K562 (cell line): ENCODE measurements at regions of chr6 and their contacts with region 1.

Region 1: DNA sequence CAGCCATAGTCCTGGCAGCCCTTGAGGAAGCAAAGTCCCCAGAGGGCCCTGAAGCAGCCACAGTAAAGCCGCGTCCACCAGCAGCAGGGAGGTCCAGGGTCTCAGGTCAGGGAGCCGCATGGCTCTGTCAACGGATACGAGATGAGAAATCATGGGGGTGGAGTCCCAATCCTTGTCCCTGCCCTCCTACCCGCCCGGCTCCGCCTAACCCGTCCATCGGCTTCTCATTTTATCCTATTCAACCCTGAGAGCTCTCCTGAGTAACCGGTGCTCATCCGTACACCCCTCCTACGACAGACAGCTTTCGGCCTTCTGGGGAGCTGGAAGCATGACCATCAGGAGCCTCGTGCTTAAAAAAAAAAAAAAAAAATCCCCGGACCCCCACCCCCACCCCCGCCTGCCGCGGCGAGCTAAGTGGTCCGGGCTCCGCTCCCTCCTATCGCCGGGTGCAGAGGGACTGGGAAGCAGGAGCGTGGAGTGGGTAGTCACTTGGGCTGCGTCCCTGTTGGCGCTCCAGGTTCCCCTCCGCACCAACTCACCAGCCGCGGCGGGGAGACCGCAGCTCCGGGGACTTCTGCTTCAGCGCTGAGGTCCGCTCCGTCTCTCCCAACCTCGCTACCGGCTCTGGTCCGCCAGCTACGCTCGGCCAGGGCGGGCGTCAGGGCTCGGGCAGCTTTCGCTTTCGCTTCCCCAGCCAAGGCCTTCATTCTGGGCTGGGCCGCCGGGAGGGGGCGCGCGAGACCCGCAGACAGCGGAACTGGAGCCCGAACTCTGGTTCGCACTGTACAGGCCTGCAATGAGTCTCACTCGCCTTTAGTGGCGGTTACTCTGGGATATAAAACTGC is at the start of gene TAP2:
- DNase-seq: peak; percentile 94 to 97 (median 96)
- ATAC-seq: peak; percentile 94
- H3K4me3 ChIP-seq: peak within 1 kb of the TSS; percentile 73
- H3K27ac ChIP-seq: peak within 1 kb of the TSS; percentile 75
- H3K4me1 ChIP-seq: peaks cover 6 to 9% of the 10 kb centered on the region in 2 experiments; a peak in 3 of 5 replicates
- H3K27me3 ChIP-seq: no peaks in the 10 kb centered on the region
- CTCF ChIP-seq: peak; percentile 98 to 99 (median 99)
- EP300 ChIP-seq: no peak
- POLR2A ChIP-seq: peak; percentile 83
- RAD21 ChIP-seq: peak; percentile 100
- polyA plus RNA-seq, gene TAP2: 2.0 to 3.1 TPM

Region 2: DNA sequence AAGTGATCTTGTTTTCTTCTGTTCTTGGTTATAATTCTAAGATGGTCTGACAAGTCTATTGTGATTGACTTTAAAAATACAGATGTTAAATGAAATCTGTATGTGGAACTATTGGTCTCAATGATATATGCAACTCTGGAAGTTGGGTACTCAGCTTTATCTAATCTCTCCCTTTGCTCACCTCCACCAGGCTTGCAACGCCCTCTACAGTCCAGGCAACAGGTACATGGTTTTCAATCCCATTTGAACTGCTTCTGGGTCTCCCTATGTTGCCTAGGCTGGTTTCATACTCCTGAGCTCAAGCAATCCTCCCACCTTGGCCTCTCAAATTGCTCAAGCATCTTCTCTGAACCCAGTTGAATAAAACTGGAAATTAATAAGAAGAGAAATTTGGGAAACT is 146.3 kb before region 1 on chr6:
- CTCF ChIA-PET with region 1: no interaction called
- POLR2A ChIA-PET with region 1: no interaction called
- in situ Hi-C with region 1: no loop called
- intact Hi-C with region 1: no loop called
- DNase-seq: peak in 2 of 4 experiments; percentile 18 to 45
- ATAC-seq: peak; percentile 69
- H3K4me3 ChIP-seq: no peak overlapping the region
- H3K27ac ChIP-seq: no peak overlapping the region
- H3K4me1 ChIP-seq: no peaks in the 10 kb centered on the region
- H3K27me3 ChIP-seq: no peaks in the 10 kb centered on the region
- CTCF ChIP-seq: peak; percentile 42 to 74 (median 65)
- EP300 ChIP-seq: no peak
- POLR2A ChIP-seq: no peak
- RAD21 ChIP-seq: peak; percentile 51 to 64

Region 3: DNA sequence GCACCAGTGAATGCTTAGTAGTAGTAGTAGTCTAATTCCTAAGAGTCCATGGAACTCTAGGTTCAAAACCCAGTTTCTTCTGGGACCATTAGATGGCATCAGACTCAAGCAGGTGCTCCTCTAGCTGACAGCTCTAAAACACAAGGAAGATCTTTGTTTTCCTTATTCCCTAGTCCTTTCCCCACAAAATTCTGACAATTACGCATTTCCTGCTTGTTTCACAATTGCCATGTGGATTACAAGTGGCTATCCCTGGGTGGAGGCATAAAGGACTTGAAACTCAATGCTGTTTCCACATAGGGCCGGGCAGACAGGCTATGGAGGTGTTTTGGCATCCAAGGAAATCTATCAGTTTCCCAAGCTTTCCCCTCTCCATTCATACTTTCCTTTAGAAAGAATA is 12.4 kb before region 1 on chr6:
- CTCF ChIA-PET with region 1: no interaction called
- POLR2A ChIA-PET with region 1: interaction called, 14 read pairs
- in situ Hi-C with region 1: no loop called
- intact Hi-C with region 1: no loop called
- DNase-seq: peak in 1 of 4 experiments; percentile 32
- ATAC-seq: peak; percentile 77
- H3K4me3 ChIP-seq: no peak overlapping the region
- H3K27ac ChIP-seq: no peak overlapping the region
- H3K4me1 ChIP-seq: no peaks in the 10 kb centered on the region
- H3K27me3 ChIP-seq: no peaks in the 10 kb centered on the region
- CTCF ChIP-seq: peak; percentile 46 to 65 (median 46); a peak in 4 of 6 replicates
- EP300 ChIP-seq: no peak
- POLR2A ChIP-seq: no peak
- RAD21 ChIP-seq: peak; percentile 57 to 77

Region 4: DNA sequence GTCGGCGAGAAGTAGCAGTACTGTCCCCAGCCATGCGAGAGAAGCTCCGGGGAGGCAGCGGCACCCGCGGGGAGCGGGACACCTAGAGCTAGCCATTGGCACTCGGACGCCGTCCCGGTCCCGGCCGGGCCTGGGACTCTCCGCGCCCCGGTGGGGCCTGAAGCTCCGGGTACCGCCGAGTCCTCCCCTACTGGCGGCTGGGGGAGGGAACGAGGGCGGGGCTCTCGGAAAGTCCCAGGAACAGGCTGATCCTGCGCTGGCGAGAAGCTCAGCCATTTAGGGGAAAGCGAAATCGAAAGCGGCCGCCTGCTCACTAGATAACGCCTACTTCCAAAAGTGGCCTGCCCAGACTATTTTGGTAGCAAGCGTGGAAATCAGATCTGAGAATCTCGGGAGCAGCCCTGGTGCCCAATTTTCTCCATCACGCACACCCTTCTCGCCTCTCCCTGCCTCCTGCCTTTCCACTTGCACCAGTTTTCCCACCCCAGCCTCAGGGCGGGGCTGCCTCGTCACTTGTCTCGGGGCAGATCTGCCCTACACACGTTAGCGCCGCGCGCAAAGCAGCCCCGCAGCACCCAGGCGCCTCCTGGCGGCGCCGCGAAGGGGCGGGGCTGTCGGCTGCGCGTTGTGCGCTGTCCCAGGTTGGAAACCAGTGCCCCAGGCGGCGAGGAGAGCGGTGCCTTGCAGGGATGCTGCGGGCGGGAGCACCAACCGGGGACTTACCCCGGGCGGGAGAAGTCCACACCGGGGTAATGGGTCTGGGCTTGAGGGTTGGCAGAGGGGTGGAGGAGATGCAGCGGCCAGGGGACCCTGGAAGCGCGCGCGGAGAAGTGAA is 15.4 kb after region 1 on chr6 and contains the starts of genes PSMB9 and TAP1:
- CTCF ChIA-PET with region 1: interaction called, 27 read pairs
- POLR2A ChIA-PET with region 1: interaction called, 56 read pairs
- in situ Hi-C with region 1: no loop called
- intact Hi-C with region 1: loop called (anchors 1 kb)
- DNase-seq: peak; percentile 94 to 96 (median 95)
- ATAC-seq: peak; percentile 98
- H3K4me3 ChIP-seq: peak within 1 kb of the TSS; percentile 65
- H3K27ac ChIP-seq: peak within 1 kb of the TSS; percentile 61
- H3K4me1 ChIP-seq: peaks cover 27 to 30% of the 10 kb centered on the region in 2 experiments
- H3K27me3 ChIP-seq: peaks cover 17 to 47% of the 10 kb centered on the region in 2 experiments
- CTCF ChIP-seq: peak; percentile 91 to 98 (median 98)
- EP300 ChIP-seq: 0 out of 2 replicates have a peak, but pooled peaks have one; percentile 33
- POLR2A ChIP-seq: no peak; the same call in 1 of the 2 replicates
- RAD21 ChIP-seq: peak; percentile 84 to 87
- polyA plus RNA-seq, gene PSMB9: 1.9 to 2.8 TPM
- polyA plus RNA-seq, gene TAP1: 1.3 to 1.7 TPM

Region 5: GRCh38 chr6:32984605-32985389 is 146.5 kb after region 1 on chr6:
- CTCF ChIA-PET with region 1: interaction called, 3 read pairs
- POLR2A ChIA-PET with region 1: interaction called, 11 read pairs
- in situ Hi-C with region 1: no loop called
- intact Hi-C with region 1: loop called (anchors 1 kb)
- DNase-seq: peak; percentile 80 to 93 (median 80)
- ATAC-seq: peak; percentile 75
- H3K4me3 ChIP-seq: no peak overlapping the region
- H3K27ac ChIP-seq: no peak overlapping the region
- H3K4me1 ChIP-seq: peaks cover 0 to 6% of the 10 kb centered on the region in 2 experiments; a peak in 2 of 5 replicates
- H3K27me3 ChIP-seq: peaks cover 8 to 15% of the 10 kb centered on the region in 2 experiments; a peak in 3 of 5 replicates
- CTCF ChIP-seq: peak; percentile 95 to 99 (median 97)
- EP300 ChIP-seq: no peak
- POLR2A ChIP-seq: no peak
- RAD21 ChIP-seq: peak; percentile 97 to 99